ENCODE measurements at regions of chr5 and their contacts with region 1.

Region 1: DNA sequence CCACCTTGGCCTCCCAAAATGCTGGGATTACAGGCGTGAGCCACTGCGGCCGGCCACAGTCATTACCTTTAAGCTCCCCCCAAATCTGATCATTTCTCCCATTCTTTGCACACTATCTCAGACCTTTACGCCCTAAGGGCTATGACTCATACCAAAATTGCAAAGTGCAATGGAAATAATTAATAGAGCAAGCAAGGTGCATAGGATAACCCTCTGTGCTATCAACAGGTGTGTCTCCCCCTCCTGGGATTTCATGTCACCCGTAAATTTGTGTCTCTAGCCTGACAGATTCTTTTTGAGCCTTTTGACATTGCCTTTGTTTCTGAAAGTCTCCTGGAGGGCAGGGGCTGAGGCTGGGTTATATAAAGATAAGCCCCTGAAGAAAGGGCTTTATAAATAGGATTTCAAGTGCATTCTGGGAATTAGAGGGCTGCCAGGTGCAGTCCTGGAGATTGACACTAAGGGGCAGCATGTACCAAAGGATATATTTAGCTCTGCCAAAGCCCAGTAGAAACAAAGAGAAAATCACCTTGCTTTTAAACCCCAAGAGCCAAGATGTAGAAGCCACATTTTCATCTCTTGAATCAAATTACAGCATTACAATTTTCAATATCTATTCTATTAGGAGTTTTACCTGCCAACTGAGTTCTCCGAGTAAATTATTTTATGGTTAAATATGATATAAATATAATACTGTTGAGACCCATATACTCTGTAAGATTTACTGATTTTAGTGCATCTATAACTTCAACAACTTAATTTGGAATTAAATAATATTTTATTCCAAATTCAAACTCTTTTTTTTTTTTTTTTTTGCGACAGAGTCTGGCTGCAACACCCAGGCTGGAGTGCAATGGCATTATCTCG is 18.2 kb downstream of the S100Z start:
- H3K4me3 Mint-ChIP-seq: no peak overlapping the region
- H3K27ac Mint-ChIP-seq: no peak overlapping the region
- H3K4me1 Mint-ChIP-seq: no peaks in the 10 kb centered on the region
- H3K27me3 Mint-ChIP-seq: no peaks in the 10 kb centered on the region

Region 2: DNA sequence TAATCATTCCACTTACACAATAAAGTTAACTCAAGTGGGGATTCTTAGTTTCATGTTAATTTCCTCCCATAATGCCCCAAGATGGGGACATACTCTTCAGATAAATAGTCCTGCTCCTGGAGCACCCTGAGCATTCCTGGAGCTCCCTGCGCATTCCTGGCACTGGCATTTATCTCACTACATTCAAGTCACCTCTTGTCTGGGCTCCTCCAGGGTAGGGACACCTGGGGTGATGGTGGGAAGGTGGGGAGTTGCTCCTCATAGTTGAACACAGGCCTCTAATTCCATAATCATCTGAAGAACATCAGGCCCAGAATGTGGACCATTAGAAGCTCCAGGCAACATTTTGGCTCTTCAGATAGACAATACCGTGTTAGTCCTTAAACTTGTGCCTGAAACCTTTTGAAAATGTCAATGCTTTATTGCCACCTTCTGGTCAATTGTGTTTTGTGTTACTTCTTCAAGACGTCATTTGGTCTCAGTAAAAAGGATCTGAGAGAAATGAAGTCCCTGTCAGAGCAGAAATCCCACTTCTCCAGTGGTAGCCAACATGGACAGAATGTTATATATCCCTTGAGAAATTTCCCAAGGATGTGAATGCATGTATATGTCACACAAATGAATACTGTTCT is 148.0 kb after region 1 on chr5:
- intact Hi-C with region 1: loop called (anchors 1 kb)
- H3K4me3 Mint-ChIP-seq: no peak overlapping the region
- H3K27ac Mint-ChIP-seq: no peak overlapping the region
- H3K4me1 Mint-ChIP-seq: peaks cover 7% of the 10 kb centered on the region
- H3K27me3 Mint-ChIP-seq: peaks cover 2% of the 10 kb centered on the region

Region 3: DNA sequence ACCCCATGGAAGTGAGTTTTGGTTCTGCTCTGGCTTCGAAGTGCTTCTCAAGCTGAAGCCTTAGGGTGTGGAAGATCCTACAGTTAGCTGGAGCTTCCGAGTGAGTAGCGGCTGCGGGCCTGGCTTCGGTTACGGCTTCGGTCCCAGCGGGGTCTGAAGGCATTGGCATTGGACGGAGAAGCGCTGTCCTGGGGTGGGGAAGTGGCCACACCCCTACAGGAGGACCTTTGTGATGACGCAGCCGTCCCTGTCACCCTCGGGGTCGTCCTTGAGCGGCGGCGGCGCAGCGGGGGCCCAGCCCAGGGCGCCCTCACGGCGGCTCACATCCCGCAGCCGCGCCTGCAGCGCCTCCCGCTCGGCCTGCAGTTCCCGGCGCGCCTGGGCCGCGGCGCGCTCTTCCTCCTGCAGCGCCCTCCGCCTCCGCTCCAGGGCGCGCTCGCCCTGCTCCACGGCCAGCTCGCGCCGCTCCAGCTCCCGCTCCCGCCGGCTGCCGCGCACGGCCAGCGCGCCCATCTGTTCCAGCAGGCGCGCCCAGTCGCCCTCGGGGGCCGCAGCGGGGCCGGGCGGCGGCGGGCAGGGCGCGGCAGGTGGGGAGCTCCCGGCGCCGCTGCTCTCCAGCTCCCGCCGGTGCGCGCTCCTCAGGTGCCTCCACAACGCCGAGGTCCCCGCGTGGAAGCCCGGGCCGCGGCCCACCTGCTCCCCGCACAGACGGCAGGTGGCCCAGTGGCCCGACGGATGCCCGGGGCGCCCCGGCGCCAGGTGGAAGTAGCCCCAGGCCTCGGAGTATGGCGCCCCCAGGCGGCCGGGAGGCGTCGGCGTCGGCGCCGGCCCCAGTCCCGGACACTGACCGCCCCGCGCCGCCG is 209.1 kb after region 1 on chr5:
- intact Hi-C with region 1: loop called (anchors 5 kb)
- H3K4me3 Mint-ChIP-seq: peak overlapping the region; percentile 69
- H3K27ac Mint-ChIP-seq: no peak overlapping the region
- H3K4me1 Mint-ChIP-seq: peaks cover 17% of the 10 kb centered on the region
- H3K27me3 Mint-ChIP-seq: peaks cover 1% of the 10 kb centered on the region

Measured in dendritic cell treated with granulocyte-macrophage colony-stimulating factor and Interleukin-4, amounts not matched to agents 40 ng/mL and 50 ng/mL, for 4 days (primary cell).